GM10248 (cell line): ENCODE measurements at regions of chr18 and their contacts with region 1.

Region 1: GRCh38 chr18:58878640-58879039 is 14.0 kb downstream of the ZNF532 start:
- DNase-seq: no peak
- CTCF ChIP-seq: no peak

Region 2: DNA sequence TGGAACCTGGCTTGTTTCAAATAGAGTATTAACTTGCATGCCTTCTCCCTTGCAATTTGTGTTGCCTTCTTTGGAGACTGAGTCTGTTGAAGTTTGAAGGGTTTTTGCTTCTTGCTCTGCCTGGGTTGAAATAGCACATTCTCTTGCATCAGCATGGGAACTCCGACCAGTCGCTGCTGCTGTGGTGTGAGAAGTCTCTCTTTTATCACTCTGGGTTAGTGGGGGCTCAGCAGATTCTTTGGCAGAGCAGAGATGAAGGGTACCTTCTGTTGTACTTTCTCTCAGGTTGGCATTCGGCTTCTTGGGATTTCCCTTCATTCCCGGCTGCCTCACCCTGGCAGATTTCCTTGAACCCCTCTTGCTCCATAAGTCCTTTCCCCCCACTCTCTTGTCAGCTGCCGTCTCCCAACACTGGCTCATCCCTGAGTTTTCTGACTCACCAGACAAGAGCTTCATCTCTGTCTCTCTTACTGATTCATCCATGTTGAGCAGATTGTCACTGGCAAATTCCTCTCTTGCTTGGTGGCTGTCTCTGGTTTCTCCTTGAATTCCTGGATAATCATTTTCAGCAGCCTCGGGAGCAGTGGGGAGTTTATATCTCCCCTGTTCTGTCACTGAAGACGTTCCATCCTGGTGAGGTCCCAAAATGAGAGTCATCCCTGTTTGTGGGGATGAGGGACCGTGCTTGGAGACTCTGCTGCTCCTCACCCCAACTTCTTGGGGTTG is 299.6 kb before region 1 on chr18:
- CTCF ChIA-PET with region 1: no interaction called
- POLR2A ChIA-PET with region 1: no interaction called
- DNase-seq: no peak
- CTCF ChIP-seq: no peak

Region 3: DNA sequence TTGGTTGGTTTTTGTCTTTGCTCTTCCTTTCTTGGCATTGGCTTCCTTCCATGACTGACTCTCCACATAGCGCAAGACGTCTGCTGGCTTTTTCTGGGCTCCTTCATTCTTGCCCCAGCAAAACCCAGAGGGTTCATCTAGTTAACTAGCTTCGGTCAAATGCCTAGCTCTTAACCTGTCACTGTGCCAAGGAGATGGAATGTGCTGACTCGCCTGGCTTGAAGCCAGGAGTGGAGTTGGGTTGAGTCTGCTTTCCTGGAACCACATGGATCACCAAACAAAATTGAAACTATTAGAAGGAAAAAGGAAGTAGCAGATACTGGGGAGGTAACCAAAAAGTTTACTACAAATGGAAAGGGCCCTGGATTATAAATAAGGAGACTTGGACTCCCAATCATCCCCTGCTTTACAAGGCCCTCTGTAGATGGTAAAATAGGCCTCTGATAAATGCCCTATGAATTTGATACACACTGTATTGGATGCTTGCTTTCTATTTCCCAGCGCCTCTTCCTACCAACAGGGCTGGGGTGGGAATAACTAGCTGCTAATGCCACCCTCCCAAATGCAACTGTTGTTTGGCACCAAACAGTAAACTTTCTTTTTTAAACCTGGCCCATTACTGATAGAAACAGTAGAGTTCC is 196.1 kb before region 1 on chr18:
- CTCF ChIA-PET with region 1: no interaction called
- POLR2A ChIA-PET with region 1: no interaction called
- DNase-seq: no peak
- CTCF ChIP-seq: no peak

Region 4: GRCh38 chr18:58847383-58848071 is 31.1 kb before region 1 on chr18:
- CTCF ChIA-PET with region 1: no interaction called
- POLR2A ChIA-PET with region 1: no interaction called
- DNase-seq: no peak
- CTCF ChIP-seq: no peak

Region 5: GRCh38 chr18:58896268-58896667 is 17.6 kb after region 1 on chr18:
- CTCF ChIA-PET with region 1: interaction called, 10 read pairs
- POLR2A ChIA-PET with region 1: no interaction called
- DNase-seq: peak; percentile 41
- CTCF ChIP-seq: no peak